GM10248 (cell line): ENCODE measurements at regions of chr20 and their contacts with region 1.

Region 1: GRCh38 chr20:63641792-63642544 is 11.3 kb downstream of the STMN3 start:
- DNase-seq: peak; percentile 97
- CTCF ChIP-seq: no peak

Region 2: DNA sequence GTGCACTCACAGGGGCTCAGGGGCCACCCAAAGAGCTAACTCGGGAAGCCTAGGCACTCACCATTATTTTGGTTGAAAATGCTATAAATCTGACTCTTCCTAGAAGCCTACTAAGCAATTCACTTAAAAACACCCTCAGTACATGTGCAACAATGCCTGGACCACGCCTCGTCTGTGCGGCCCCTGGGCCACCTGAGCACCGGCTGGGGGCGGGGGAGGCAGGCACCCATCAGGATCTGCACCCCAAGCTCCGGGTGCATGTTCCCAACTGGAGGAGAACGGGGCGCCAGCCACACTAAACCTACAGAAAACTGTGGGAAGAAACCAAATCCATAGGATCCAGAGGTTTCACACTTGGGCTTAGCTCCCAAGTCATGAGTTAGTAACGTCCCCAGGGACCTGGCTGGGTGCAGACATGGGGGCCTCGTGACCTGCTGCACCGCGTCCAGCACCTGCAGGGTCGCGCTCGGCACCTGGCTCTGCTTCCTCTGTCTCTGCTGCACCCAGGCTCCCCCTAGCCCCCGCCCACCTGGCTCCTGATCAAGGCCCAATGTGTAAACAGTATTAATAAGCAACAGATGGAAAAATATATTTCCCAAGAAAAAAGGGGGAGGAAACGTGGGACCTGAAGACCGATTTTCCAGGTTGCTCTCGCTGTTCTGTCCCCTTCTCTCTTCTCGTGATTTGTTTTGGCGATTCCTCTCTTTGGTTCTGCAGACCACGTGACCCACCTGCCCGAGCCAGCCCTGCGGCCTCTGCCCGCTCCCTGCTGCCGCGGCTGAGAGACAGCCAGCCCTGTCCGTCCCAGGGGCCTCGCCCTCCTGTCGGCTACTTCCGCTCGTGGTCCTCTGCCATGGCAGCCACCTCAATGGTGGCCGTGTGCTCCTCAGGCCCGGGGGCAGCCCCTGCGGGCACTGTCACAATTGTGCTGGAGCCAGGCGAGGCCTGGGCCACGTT is 52.4 kb before region 1 on chr20:
- CTCF ChIA-PET with region 1: no interaction called
- POLR2A ChIA-PET with region 1: no interaction called
- DNase-seq: no peak
- CTCF ChIP-seq: no peak

Region 3: DNA sequence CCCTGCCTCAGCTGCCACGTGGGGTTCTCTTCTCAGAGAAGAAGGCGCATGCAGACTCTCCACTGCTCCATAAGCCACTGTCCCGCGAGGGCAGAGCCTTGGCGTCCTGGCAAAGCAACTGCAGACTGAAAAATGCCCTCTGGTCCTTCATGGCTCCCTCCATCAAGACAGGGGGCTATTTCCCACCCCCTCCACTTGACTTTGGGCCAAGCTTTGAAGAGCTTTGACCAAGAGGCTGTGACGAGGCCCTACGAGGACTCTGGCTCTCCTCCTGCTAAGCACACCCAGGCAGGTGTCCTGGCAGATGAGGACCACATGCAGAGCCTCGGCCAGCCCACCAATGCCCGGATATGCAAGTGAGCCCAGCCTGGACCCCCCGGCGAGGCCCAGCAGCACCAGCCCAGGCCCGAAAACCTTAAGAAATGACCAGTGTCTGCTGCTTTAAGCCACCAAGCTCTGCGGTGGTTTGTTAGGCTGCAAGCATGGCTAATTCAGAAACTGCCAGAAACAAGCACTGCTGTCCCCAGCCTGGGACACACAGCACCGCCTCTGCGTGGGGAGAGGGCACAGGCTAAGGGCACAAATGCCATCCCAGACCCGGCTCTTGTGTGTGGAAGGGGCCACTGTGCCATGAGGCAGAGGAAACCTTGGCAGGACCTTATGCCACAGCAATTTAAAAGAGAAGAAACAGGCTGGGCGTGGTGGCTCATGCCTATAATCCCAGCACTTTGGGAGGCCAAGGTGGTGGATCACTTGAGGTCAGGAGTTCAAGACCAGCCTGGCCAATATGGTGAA is 31.1 kb before region 1 on chr20:
- CTCF ChIA-PET with region 1: no interaction called
- POLR2A ChIA-PET with region 1: no interaction called
- DNase-seq: no peak
- CTCF ChIP-seq: no peak

Region 4: GRCh38 chr20:63627129-63627750 is 14.7 kb before region 1 on chr20:
- CTCF ChIA-PET with region 1: interaction called, 11 read pairs
- POLR2A ChIA-PET with region 1: interaction called, 9 read pairs
- DNase-seq: peak; percentile 96
- CTCF ChIP-seq: no peak

Region 5: DNA sequence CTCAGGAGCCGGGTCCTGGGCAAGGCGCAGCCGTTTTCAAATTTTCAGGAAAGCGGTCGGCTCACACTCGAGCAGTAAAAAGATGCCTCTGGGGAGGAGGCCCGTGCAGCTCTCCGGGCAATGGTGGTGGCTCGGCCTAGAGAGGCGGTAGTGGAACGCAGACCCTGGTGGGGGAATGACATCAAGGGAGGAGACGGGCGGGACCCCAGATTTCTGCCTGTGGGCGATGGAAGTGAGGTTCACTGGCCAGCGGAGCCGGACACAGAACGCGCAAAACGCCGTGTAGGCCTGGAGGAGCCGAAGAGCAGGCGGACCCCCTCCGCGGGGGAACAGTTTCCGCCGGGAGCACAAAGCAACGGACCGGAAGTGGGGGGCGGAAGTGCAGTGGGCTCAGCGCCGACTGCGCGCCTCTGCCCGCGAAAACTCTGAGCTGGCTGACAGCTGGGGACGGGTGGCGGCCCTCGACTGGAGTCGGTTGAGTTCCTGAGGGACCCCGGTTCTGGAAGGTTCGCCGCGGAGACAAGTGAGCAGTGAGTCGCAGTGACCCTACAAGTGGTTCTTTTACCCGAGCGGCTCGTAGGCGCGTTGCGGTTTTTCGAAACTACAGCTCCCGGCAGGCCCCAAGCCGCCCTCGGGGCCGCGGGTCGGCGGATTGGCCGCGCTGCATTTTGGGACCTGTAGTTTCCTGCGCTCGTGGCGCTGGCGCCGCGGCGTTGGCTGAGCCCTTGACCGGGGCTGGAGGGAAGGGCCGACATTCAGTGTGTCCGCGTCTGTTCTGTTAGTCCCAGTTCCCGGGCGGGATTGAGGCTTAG is 16.2 kb after region 1 on chr20 and contains the start of gene RTEL1:
- CTCF ChIA-PET with region 1: interaction called, 11 read pairs
- POLR2A ChIA-PET with region 1: interaction called, 4 read pairs
- DNase-seq: peak; percentile 96
- CTCF ChIP-seq: no peak

Region 6: DNA sequence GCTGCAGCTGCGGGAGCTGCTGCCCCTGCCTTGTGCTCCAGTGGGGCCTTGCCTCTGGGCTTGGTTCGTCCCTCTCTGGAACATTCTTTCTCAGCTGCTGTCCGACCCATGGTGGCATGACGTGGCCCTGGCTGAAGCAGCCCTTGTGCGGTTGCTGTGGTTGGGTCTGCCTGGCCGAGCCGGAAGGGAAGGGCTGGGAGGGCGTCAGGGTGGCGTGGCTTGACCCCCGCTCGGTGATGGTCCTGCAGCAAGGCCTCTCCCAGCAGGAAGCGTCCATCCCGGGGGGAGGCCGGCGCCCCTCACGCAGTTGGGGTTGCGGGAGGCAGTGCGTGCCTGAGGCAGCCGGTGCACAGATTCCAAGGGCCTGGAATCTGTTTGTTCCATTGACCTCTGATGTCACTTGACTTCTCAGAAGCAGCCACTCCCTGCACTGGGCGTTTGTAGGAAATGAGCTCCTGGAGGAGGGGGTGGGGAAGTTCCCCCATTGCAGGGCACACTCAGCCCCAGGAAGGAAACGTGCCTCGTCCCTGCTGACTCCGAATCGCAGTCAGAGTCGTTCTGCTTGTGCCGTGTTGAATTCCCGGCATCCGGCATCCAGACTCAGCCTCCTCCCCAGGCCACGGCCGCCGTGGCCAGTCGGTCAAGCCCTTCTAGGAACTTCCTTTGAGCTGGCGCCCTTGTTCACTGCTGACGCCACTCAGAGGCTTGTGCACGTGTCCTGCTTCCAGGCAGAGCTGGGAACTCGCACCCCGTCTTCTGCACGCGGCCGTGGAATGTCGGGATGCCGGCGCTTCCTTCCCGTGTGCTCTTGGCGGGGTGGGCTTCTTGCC is 44.7 kb after region 1 on chr20:
- CTCF ChIA-PET with region 1: no interaction called
- POLR2A ChIA-PET with region 1: no interaction called
- DNase-seq: no peak
- CTCF ChIP-seq: no peak

Region 7: DNA sequence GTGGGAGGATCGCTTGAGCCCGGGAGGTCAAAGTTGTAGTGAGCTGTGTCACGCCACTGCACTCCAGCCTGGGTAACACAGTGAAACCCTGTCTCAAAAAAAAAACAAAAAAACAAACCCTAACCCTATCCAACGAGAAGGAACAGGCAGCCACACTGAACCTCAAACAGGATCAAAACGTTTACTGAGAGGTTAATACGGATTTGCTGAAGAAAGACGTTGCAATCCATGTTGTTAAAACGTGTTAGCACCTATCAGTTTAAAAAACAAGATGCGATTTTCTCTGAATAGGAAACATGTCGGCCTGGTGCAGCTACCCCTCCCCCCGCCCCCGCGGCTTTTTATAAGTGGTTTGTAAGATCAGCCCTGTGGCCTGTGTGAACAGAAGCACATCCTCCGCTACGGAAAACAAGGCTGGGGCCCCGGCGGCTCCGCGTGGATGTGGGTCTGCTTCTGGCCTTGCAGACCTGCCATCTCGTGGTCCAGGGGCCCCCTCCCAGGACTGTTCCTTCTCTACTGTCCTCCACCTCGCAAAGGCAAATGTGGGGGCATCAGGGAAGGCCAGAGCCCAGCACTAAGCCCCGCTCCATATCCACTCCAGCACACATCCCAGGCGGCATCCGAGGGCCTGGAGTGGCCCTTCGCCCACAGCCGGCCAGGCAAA is 109.0 kb after region 1 on chr20:
- CTCF ChIA-PET with region 1: no interaction called
- POLR2A ChIA-PET with region 1: no interaction called
- DNase-seq: no peak
- CTCF ChIP-seq: no peak